Activated T-helper 2 cell treated with anti-CD3 and anti-CD28 coated beads, Interferon-gamma antibody, Interleukin-2, Interleukin-4, amounts not matched to agents 10 μg/mL and 5 μg/mL and 100 μg/mL, durations not matched to agents 14 hours and 24 hours and 36 hours (primary cell): ENCODE measurements at regions of chr13 and their contacts with region 1.

Region 1: GRCh38 chr13:27923794-27924528 is 4.2 kb downstream of the PDX1 start:
- DNase-seq: no peak
- H3K4me3 Mint-ChIP-seq: no peak overlapping the region
- H3K27ac Mint-ChIP-seq: peak overlapping the region; percentile 16
- H3K4me1 Mint-ChIP-seq: peaks cover 9% of the 10 kb centered on the region
- H3K27me3 Mint-ChIP-seq: peaks cover 85% of the 10 kb centered on the region

Region 2: GRCh38 chr13:27792393-27793218 is 131.4 kb before region 1 on chr13 and contains the start of gene GSX1:
- intact Hi-C with region 1: loop called (anchors 2 kb)
- DNase-seq: peak; percentile 36
- H3K4me3 Mint-ChIP-seq: peak within 1 kb of the TSS; percentile 59
- H3K27ac Mint-ChIP-seq: no peak within 1 kb of the TSS
- H3K4me1 Mint-ChIP-seq: peaks cover 19% of the 10 kb centered on the region
- H3K27me3 Mint-ChIP-seq: peaks cover 73% of the 10 kb centered on the region
- total RNA-seq, gene GSX1: not detected in 2 replicates

Region 3: DNA sequence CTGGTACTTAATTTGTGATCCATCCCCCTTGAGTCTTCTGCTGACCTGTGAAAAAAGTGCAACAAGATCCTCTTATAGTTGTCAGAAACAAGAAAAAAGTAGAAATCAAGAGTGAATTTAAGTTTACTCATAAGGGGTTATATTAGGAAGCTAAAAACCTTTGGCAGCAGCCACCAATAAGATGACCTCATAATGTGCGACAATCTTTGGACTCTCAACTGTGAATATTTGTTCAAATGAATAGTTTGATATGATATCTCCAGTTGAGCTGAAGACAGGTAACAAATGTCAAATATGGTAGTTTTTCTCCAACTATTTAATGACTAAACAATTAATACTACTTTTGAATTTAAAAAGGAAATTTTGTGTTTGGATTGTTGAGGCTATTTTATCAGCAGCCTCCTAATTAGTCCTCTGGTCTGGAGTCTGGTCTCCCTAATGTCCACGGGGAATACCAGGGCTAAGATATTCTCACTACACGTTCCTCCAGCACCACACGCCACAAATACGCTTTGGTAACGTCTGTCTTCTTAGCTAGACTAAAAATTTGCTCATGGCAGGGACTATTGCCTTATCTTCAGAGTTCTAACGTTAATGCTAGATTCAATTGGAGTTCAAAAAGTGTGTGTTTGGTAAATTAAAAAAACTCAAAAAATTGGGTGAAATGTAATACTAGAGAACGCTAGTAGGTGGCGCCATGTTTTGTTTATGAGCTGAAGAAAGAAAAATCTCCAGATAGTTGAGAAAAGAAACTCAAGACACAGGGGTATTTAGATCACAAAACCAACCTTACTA is 55.1 kb before region 1 on chr13:
- intact Hi-C with region 1: no loop called
- DNase-seq: no peak
- H3K4me3 Mint-ChIP-seq: no peak overlapping the region
- H3K27ac Mint-ChIP-seq: no peak overlapping the region
- H3K4me1 Mint-ChIP-seq: no peaks in the 10 kb centered on the region
- H3K27me3 Mint-ChIP-seq: peaks cover 16% of the 10 kb centered on the region

Region 4: GRCh38 chr13:27889471-27889870 is 34.5 kb before region 1 on chr13:
- intact Hi-C with region 1: no loop called
- DNase-seq: no peak
- H3K4me3 Mint-ChIP-seq: no peak overlapping the region
- H3K27ac Mint-ChIP-seq: no peak overlapping the region
- H3K4me1 Mint-ChIP-seq: peaks cover 2% of the 10 kb centered on the region
- H3K27me3 Mint-ChIP-seq: peaks cover 21% of the 10 kb centered on the region

Region 5: GRCh38 chr13:27953676-27954405 is 29.9 kb after region 1 on chr13:
- intact Hi-C with region 1: loop called (anchors 2 kb)
- DNase-seq: peak; percentile 47
- H3K4me3 Mint-ChIP-seq: peak overlapping the region; percentile 66
- H3K27ac Mint-ChIP-seq: no peak overlapping the region
- H3K4me1 Mint-ChIP-seq: peaks cover 9% of the 10 kb centered on the region
- H3K27me3 Mint-ChIP-seq: peaks cover 63% of the 10 kb centered on the region

Region 6: DNA sequence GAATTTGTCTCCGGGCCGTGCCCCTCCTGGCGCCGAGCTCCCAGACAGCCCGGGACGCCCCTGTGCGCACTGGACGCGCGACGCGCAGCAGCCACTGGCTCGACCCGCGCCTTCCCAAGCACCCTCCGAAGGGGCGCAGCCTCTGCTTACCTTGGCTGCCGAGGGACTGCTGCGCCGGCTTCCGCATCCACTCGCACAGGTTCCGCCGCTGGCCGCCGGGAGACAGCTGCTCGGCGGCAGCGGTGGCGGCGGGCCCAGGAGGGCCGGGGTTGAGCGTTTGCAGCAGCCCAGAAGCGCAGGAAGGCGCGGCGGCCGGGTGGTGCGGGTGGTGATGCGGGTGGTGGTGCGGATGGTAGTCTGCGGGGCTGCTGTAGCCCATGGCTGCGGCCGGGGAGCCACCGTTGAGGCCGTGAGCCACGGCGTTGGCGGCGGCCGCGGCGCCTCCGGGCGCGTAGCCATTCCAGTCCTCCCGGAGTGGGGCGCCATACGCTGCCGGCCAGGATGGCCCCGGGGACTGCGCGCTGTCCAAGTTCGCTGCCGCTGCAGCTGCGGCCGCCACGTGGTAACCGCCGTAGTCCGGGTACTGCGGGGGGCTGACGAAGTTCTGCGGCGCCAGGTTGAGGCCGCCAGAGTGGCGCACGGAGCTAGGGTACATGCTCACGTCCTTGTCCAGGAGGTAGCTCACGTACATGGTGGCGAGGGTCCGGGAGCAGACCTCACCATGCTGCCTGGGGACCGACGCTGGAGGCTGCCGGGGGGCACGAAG is 44.5 kb after region 1 on chr13:
- intact Hi-C with region 1: loop called (anchors 2 kb)
- DNase-seq: no peak
- H3K4me3 Mint-ChIP-seq: no peak overlapping the region
- H3K27ac Mint-ChIP-seq: no peak overlapping the region
- H3K4me1 Mint-ChIP-seq: no peaks in the 10 kb centered on the region
- H3K27me3 Mint-ChIP-seq: peaks cover 81% of the 10 kb centered on the region

Region 7: DNA sequence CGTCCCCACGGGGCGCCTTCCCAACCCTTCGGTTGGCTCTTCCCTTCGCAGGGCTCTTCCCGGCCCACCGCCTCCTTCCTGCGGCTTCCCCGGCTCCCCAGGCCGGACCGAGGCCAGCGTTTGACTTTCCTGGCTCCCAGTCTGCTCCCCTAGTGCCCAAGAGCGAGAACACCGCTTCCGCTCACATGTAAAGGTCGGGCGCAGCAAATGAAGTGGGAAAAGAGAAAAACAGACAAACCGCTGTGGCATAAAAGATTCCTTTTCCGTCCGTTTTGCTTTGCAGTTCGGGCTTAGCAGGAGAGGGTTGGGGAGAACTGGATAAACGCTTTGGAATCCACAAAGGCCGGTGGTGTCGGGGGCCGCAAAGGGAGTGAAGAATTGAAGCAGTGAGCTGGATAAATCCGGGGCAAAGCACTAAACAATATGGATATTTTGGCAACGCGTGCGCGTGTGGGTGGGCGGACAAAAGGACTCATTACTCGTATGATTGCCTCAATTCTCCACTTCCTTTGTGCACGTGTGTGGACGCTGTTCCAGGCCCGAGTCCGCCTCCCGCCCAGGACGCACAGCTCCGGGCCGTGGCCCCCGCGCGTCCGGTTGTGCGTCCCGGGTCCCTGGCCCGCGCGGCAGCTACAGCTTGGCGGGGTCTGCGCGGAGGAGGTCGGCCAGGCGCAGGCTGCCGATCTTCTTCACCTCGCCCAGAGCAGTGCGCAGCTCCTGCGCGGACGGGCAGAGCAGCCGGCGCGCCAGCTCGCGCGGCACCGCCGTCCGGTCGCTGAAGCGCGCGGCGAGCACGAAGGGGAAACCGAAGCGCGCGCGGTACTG is 53.7 kb after region 1 on chr13:
- intact Hi-C with region 1: loop called (anchors 2 kb)
- DNase-seq: no peak
- H3K4me3 Mint-ChIP-seq: no peak overlapping the region
- H3K27ac Mint-ChIP-seq: peak overlapping the region; percentile 74
- H3K4me1 Mint-ChIP-seq: peaks cover 5% of the 10 kb centered on the region
- H3K27me3 Mint-ChIP-seq: peaks cover 81% of the 10 kb centered on the region